ENCODE measurements at regions of chr7 and their contacts with region 1.

Region 1: GRCh38 chr7:101058355-101058754 is 26.9 kb upstream of the TRIM56 start:
- DNase-seq: peak; percentile 24
- H3K4me3 ChIP-seq: no peak overlapping the region
- H3K27ac ChIP-seq: no peak overlapping the region
- H3K4me1 ChIP-seq: no peaks in the 10 kb centered on the region
- H3K27me3 ChIP-seq: peaks cover 3% of the 10 kb centered on the region
- CTCF ChIP-seq: no peak
- POLR2A ChIP-seq: no peak

Region 2: GRCh38 chr7:100773491-100773890 is 284.9 kb before region 1 on chr7:
- intact Hi-C with region 1: no loop called
- DNase-seq: no peak
- H3K4me3 ChIP-seq: no peak overlapping the region
- H3K27ac ChIP-seq: no peak overlapping the region
- H3K4me1 ChIP-seq: no peaks in the 10 kb centered on the region
- H3K27me3 ChIP-seq: no peaks in the 10 kb centered on the region
- CTCF ChIP-seq: no peak
- POLR2A ChIP-seq: no peak

Region 3: GRCh38 chr7:100896732-100897608 is 161.4 kb before region 1 on chr7:
- intact Hi-C with region 1: loop called (anchors 1 kb)
- DNase-seq: peak; percentile 44
- H3K4me3 ChIP-seq: peak overlapping the region; percentile 8 to 26
- H3K27ac ChIP-seq: no peak overlapping the region
- H3K4me1 ChIP-seq: peaks cover 10% of the 10 kb centered on the region
- H3K27me3 ChIP-seq: no peaks in the 10 kb centered on the region
- CTCF ChIP-seq: peak; percentile 49 to 89 (median 78)
- POLR2A ChIP-seq: no peak

Region 4: DNA sequence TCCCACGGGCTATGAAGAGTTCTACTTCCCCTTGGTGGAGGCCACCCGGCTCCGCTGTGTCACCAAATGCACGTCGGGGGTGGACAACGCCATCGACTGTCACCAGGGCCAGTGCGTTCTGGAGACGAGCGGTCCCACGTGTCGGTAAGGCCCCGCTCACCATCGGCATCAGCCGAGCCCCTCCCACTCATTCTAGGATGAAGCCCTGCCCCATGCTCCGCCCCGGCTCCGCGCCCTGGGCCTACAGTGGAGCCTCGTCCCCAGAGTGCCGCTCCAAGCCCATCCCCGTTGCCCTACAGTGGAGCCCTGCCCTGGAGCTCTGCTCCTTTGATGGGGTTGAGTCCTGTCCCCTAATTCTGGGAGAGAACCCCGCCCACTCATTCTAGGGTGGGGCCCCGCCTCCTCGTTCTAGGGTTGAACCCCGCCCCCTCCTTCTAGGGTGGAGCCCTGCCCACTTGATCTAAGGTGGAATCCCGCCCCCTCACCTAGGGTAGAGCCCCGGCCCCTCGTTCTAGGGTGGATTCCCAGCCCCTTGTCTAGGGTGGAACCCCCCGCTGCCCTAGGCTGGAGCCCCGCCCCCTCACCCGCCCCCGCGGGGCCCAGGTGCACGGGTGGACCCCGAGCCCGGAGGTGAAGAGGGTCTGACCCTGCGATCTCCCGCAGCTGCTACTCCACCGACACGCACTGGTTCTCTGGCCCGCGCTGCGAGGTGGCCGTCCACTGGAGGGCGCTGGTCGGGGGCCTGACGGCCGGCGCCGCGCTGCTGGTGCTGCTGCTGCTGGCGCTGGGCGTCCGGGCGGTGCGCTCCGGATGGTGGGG is 92.4 kb before region 1 on chr7:
- intact Hi-C with region 1: loop called (anchors 5 kb)
- DNase-seq: peak; percentile 85
- H3K4me3 ChIP-seq: peak overlapping the region; percentile 23 to 35
- H3K27ac ChIP-seq: peak overlapping the region in 1 of 2 donors; percentile 36
- H3K4me1 ChIP-seq: peaks cover 9% of the 10 kb centered on the region
- H3K27me3 ChIP-seq: peaks cover 25% of the 10 kb centered on the region
- CTCF ChIP-seq: peak; percentile 83 to 97 (median 89)
- POLR2A ChIP-seq: peak; percentile 59

Region 5: DNA sequence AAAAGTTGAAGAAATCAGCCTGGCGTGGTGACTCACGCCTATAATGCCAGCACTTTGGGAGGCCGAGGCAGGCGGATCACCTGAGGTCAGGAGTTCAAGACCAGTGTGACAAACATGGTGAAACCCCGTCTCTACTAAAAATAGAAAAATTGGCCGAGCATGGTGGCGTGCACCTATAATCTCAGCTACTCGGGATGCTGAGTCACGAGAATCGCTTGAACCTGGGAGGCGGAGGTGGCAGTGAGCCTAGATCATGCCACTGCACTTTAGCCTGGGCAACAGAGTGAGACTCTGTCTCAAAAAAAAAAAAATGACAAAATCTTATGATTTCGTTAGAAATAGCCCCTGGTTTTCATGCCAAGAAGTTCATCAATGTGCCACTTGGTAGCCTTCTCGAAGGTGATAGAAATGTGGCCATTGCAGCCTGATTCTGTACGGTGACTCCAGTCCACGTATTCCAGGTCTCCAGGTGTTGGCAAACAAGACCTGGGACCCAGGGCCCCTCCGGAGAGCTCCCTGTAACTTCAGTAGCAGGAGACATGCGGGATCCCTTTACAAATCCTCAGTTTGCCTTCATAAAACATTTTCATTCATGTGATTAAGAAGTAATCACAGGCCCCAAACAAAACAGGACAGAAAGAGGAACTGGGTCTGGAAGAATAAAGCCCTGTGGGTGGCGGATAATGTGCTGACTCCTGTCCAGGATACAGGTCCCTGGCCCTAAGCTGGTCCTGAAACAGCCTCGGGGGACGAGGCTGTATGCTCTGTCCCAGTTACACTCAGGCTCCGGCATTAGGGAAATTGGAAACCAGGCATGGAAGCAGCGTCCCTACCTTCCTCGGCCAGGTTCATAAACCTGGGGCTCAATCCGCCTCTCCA is 1021.0 kb after region 1 on chr7:
- intact Hi-C with region 1: no loop called
- DNase-seq: no peak
- H3K4me3 ChIP-seq: no peak overlapping the region
- H3K27ac ChIP-seq: no peak overlapping the region
- H3K4me1 ChIP-seq: peaks cover 4% of the 10 kb centered on the region
- H3K27me3 ChIP-seq: no peaks in the 10 kb centered on the region
- CTCF ChIP-seq: no peak
- POLR2A ChIP-seq: no peak

Measured in prostate gland (tissue), 2 donors.